MCF 10A (cell line): ENCODE measurements at regions of chr17 and their contacts with region 1.

Region 1: GRCh38 chr17:40139566-40140058 is 725 bp upstream of the CASC3 start:
- DNase-seq: no peak
- H3K4me3 Mint-ChIP-seq: peak overlapping the region; percentile 90
- H3K27ac Mint-ChIP-seq: peak overlapping the region; percentile 81
- H3K4me1 Mint-ChIP-seq: peaks cover 8% of the 10 kb centered on the region
- H3K27me3 Mint-ChIP-seq: no peaks in the 10 kb centered on the region
- CTCF ChIP-seq: no peak

Region 2: DNA sequence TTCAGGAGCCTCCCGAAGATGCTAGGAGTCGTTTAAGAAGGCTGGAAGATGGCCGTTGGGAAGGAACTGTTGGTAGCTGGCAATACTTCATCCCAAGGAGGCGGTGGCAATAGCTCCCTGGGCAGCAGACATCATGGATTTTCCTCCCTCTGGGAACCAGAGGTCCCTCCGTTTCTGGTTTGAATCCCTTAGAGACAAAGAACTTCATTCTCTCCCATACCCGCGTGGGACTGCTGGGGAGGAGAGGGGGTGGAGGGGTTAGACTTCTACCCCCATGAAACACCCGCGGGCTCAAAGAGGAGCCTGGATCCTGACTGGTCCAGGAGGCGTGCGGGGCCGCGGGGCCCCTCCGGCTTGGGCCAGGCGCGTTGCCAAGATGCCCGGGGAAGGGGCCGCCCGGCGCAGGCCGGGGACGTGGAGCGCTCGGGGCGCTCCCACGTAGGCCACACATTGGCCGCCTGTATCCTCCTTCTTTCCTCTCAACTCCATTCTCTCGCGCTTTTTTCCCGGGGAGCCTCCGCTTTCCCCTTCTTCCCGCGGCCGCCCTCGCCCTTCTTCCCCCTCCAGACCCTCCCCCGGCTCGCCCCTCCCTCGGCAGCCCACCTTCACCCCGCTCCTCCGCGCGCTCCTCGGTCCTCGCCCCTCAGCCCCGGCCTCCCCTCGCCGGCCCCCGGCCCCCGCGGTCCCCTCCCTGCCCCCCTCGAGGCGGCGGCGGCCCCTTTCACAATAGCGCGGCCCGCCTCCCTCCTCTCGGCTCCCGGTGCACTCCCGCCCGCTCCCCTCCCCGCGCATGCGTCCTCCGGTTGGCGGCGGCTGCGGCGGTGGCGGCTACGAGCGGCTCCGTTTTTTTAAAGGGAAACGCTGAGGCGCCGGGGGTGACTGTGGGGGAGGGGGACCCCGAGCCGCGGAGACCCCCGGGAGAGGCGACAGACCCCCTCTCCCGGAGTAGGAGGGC is 18.2 kb before region 1 on chr17 and contains the start of gene MSL1:
- CTCF ChIA-PET with region 1: interaction called, 9 read pairs
- POLR2A ChIA-PET with region 1: interaction called, 160 read pairs
- intact Hi-C with region 1: loop called (anchors 1 kb)
- DNase-seq: peak; percentile 81
- H3K4me3 Mint-ChIP-seq: peak within 1 kb of the TSS; percentile 99
- H3K27ac Mint-ChIP-seq: peak within 1 kb of the TSS; percentile 82
- H3K4me1 Mint-ChIP-seq: peaks cover 20% of the 10 kb centered on the region
- H3K27me3 Mint-ChIP-seq: no peaks in the 10 kb centered on the region
- CTCF ChIP-seq: no peak
- total RNA-seq, gene MSL1: 59.8 and 62.2 TPM in 2 replicates

Region 3: GRCh38 chr17:40168262-40168832 is 28.7 kb after region 1 on chr17:
- CTCF ChIA-PET with region 1: interaction called, 8 read pairs
- POLR2A ChIA-PET with region 1: interaction called, 15 read pairs
- intact Hi-C with region 1: no loop called
- DNase-seq: peak; percentile 57
- H3K4me3 Mint-ChIP-seq: no peak overlapping the region
- H3K27ac Mint-ChIP-seq: peak overlapping the region; percentile 47
- H3K4me1 Mint-ChIP-seq: peaks cover 7% of the 10 kb centered on the region
- H3K27me3 Mint-ChIP-seq: no peaks in the 10 kb centered on the region
- CTCF ChIP-seq: peak; percentile 70

Region 4: GRCh38 chr17:40177275-40177874 is 37.8 kb after region 1 on chr17 and contains the start of gene RAPGEFL1:
- CTCF ChIA-PET with region 1: interaction called, 3 read pairs
- POLR2A ChIA-PET with region 1: interaction called, 65 read pairs
- intact Hi-C with region 1: no loop called
- DNase-seq: peak; percentile 69
- H3K4me3 Mint-ChIP-seq: peak within 1 kb of the TSS; percentile 59
- H3K27ac Mint-ChIP-seq: peak within 1 kb of the TSS; percentile 92
- H3K4me1 Mint-ChIP-seq: peaks cover 29% of the 10 kb centered on the region
- H3K27me3 Mint-ChIP-seq: no peaks in the 10 kb centered on the region
- CTCF ChIP-seq: no peak
- total RNA-seq, gene RAPGEFL1: 4.9 and 5.6 TPM in 2 replicates

Region 5: GRCh38 chr17:40191237-40192208 is 51.9 kb after region 1 on chr17:
- CTCF ChIA-PET with region 1: interaction called, 3 read pairs
- POLR2A ChIA-PET with region 1: interaction called, 16 read pairs
- intact Hi-C with region 1: no loop called
- DNase-seq: peak; percentile 66
- H3K4me3 Mint-ChIP-seq: peak overlapping the region; percentile 72
- H3K27ac Mint-ChIP-seq: no peak overlapping the region
- H3K4me1 Mint-ChIP-seq: peaks cover 18% of the 10 kb centered on the region
- H3K27me3 Mint-ChIP-seq: no peaks in the 10 kb centered on the region
- CTCF ChIP-seq: no peak

Region 6: GRCh38 chr17:40241252-40241834 is 101.7 kb after region 1 on chr17:
- CTCF ChIA-PET with region 1: no interaction called
- POLR2A ChIA-PET with region 1: no interaction called
- intact Hi-C with region 1: no loop called
- DNase-seq: no peak
- H3K4me3 Mint-ChIP-seq: no peak overlapping the region
- H3K27ac Mint-ChIP-seq: no peak overlapping the region
- H3K4me1 Mint-ChIP-seq: peaks cover 14% of the 10 kb centered on the region
- H3K27me3 Mint-ChIP-seq: no peaks in the 10 kb centered on the region
- CTCF ChIP-seq: no peak